A549 (cell line): ENCODE measurements at regions of chr9 and their contacts with region 1.

Region 1: GRCh38 chr9:36407122-36407723 is 7.2 kb upstream of the RNF38 start:
- DNase-seq: peak; percentile 59 to 68
- ATAC-seq: peak; percentile 95 to 98
- H3K4me3 ChIP-seq: no peak overlapping the region
- H3K27ac ChIP-seq: no peak overlapping the region
- H3K4me1 ChIP-seq: peaks cover 6% of the 10 kb centered on the region; the same call in 1 of the 3 replicates
- CTCF ChIP-seq: peak; percentile 94
- EP300 ChIP-seq: no peak
- POLR2A ChIP-seq: no peak
- RAD21 ChIP-seq: peak; percentile 95 to 96

Region 2: DNA sequence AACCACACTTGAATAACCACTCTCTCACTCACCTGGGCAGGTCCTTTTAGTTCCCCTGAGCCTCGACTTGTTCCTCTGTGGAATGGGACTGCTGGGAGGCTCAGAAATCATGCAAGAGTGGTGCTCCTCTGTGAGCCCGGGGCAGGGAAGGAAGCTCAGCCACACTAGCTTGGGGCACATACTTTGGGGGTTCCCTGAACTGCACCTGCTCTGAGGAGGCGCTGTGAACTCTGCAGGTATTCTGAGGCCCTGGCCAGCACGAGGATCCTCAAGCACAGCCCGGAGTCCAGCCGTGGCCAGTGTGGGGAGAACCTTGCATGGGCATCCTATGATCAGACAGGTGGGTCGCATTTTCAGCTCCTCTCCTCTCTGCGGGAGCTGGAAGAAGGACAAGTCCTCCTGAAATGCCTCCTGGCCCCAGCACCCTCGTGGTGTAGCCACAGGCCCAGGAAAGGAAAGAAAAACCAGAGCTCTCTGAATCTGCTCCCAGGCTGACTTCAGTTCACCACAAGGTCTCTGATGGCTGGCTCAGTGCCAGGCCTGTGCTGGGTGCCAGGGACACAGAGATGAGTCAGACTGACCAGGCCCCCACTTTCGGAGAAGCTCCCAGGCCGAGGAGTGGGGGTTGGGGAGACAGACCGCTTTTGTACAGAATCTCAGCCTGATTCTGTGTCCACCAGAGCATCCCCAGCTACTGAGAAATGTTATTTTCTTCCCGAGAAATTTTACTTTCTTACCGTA is 258.7 kb before region 1 on chr9:
- CTCF ChIA-PET with region 1: no interaction called
- POLR2A ChIA-PET with region 1: no interaction called
- DNase-seq: peak; percentile 85 to 91
- ATAC-seq: peak; percentile 81
- H3K4me3 ChIP-seq: no peak overlapping the region
- H3K27ac ChIP-seq: peak overlapping the region; percentile 65 to 82
- H3K4me1 ChIP-seq: peaks cover 26% of the 10 kb centered on the region
- CTCF ChIP-seq: no peak
- EP300 ChIP-seq: no peak
- POLR2A ChIP-seq: no peak
- RAD21 ChIP-seq: no peak; a peak in 2 of 5 replicates

Region 3: GRCh38 chr9:36423206-36423605 is 16.0 kb after region 1 on chr9:
- CTCF ChIA-PET with region 1: interaction called, 134 read pairs
- POLR2A ChIA-PET with region 1: no interaction called
- DNase-seq: no peak
- ATAC-seq: no peak
- H3K4me3 ChIP-seq: no peak overlapping the region
- H3K27ac ChIP-seq: no peak overlapping the region
- H3K4me1 ChIP-seq: peaks cover 37% of the 10 kb centered on the region
- CTCF ChIP-seq: no peak
- EP300 ChIP-seq: no peak
- POLR2A ChIP-seq: no peak
- RAD21 ChIP-seq: no peak

Region 4: GRCh38 chr9:36450110-36450732 is 43.0 kb after region 1 on chr9:
- CTCF ChIA-PET with region 1: interaction called, 437 read pairs
- POLR2A ChIA-PET with region 1: interaction called, 5 read pairs
- DNase-seq: peak; percentile 38 to 60
- ATAC-seq: peak; percentile 59 to 66; a peak in 3 of 6 replicates
- H3K4me3 ChIP-seq: no peak overlapping the region
- H3K27ac ChIP-seq: no peak overlapping the region
- H3K4me1 ChIP-seq: peaks cover 4% of the 10 kb centered on the region; the same call in 1 of the 3 replicates
- CTCF ChIP-seq: peak; percentile 96
- EP300 ChIP-seq: no peak
- POLR2A ChIP-seq: no peak
- RAD21 ChIP-seq: peak; percentile 82 to 91

Region 5: GRCh38 chr9:36487482-36488388 is 80.5 kb after region 1 on chr9:
- CTCF ChIA-PET with region 1: interaction called, 15 read pairs
- POLR2A ChIA-PET with region 1: no interaction called
- DNase-seq: peak; percentile 63 to 87
- ATAC-seq: peak; percentile 93 to 99
- H3K4me3 ChIP-seq: peak overlapping the region; percentile 97
- H3K27ac ChIP-seq: peak overlapping the region; percentile 92 to 97
- H3K4me1 ChIP-seq: peaks cover 17% of the 10 kb centered on the region; the same call in 2 of the 3 replicates
- CTCF ChIP-seq: no peak
- EP300 ChIP-seq: no peak
- POLR2A ChIP-seq: peak; percentile 75
- RAD21 ChIP-seq: no peak

Region 6: GRCh38 chr9:36566813-36567221 is 159.6 kb after region 1 on chr9:
- CTCF ChIA-PET with region 1: interaction called, 227 read pairs
- POLR2A ChIA-PET with region 1: no interaction called
- DNase-seq: peak; percentile 50 to 52
- ATAC-seq: peak; percentile 85 to 93
- H3K4me3 ChIP-seq: no peak overlapping the region
- H3K27ac ChIP-seq: peak overlapping the region; percentile 62 to 83
- H3K4me1 ChIP-seq: peaks cover 12% of the 10 kb centered on the region
- CTCF ChIP-seq: no peak
- EP300 ChIP-seq: no peak
- POLR2A ChIP-seq: no peak
- RAD21 ChIP-seq: no peak

Region 7: DNA sequence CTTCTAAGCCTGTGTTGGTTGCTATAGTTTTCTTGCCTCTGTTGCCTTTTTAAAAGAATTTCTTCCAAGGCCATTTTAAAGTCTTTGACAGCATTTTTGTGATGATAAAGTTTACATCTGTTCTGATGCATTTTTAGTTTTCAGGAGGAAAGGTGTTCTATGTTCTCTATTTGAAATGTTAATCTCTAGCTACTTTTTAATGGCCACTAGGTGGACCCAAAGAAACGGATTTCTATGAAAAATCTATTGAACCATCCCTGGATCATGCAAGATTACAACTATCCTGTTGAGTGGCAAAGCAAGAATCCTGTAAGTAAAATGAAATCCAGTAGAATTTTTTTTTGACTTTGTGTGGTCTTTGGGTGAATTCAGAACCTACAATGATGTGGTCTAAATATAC is 225.7 kb after region 1 on chr9:
- CTCF ChIA-PET with region 1: interaction called, 11 read pairs
- POLR2A ChIA-PET with region 1: no interaction called
- DNase-seq: peak; percentile 25 to 36
- ATAC-seq: peak in 1 of 2 experiments; percentile 70; a peak in 3 of 6 replicates
- H3K4me3 ChIP-seq: no peak overlapping the region
- H3K27ac ChIP-seq: no peak overlapping the region
- H3K4me1 ChIP-seq: no peaks in the 10 kb centered on the region
- CTCF ChIP-seq: peak; percentile 67
- EP300 ChIP-seq: no peak
- POLR2A ChIP-seq: no peak
- RAD21 ChIP-seq: peak; percentile 39 to 57

Region 8: DNA sequence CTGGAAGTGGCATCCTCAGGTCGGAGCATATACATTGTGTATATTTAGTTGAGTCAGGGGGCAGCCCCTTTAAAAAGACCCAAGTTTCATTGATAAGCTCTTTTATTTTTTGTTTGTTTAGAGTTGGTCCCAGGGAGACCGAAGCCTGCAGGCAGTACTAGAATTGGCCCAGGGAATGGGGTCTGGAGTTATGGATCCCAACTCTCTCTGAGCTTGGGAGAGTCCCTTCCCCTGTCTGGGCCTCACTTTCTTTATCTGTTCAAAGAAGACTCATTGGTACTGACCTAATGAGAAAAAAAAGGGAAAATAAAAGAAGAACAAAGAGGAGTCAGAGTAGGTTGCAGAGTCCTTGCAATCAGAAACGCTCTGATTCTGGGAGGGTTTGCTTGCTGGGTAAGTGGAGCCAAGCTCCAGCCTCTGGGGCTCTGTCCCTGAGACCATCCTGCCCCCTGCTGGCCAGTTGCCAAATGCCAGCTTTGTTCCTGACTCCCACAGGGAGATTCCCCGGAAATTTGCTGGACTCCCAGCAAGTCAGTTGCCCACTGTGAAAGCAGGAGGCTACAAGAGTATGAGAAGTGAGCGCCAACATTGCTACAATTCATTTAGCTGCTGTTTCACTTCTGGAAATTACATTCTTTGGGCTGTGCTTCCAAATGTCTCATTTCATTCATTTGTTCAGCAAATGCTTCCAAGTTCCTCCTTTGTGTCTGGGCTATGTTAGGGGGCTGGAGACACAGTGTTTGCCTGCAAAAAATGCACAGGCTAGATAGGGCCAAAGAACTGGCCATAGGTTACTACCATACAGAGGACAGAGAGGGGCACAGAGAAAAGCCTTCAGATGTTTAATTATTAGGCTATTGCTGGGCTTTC is 321.7 kb after region 1 on chr9:
- CTCF ChIA-PET with region 1: interaction called, 25 read pairs
- POLR2A ChIA-PET with region 1: interaction called, 3 read pairs
- DNase-seq: peak; percentile 54 to 76
- ATAC-seq: peak; percentile 87 to 97
- H3K4me3 ChIP-seq: no peak overlapping the region
- H3K27ac ChIP-seq: no peak overlapping the region
- H3K4me1 ChIP-seq: no peaks in the 10 kb centered on the region
- CTCF ChIP-seq: peak; percentile 82
- EP300 ChIP-seq: no peak
- POLR2A ChIP-seq: no peak
- RAD21 ChIP-seq: peak; percentile 86 to 90